OCI-LY7 (cell line): ENCODE measurements at regions of chr1 and their contacts with region 1.

Region 1: DNA sequence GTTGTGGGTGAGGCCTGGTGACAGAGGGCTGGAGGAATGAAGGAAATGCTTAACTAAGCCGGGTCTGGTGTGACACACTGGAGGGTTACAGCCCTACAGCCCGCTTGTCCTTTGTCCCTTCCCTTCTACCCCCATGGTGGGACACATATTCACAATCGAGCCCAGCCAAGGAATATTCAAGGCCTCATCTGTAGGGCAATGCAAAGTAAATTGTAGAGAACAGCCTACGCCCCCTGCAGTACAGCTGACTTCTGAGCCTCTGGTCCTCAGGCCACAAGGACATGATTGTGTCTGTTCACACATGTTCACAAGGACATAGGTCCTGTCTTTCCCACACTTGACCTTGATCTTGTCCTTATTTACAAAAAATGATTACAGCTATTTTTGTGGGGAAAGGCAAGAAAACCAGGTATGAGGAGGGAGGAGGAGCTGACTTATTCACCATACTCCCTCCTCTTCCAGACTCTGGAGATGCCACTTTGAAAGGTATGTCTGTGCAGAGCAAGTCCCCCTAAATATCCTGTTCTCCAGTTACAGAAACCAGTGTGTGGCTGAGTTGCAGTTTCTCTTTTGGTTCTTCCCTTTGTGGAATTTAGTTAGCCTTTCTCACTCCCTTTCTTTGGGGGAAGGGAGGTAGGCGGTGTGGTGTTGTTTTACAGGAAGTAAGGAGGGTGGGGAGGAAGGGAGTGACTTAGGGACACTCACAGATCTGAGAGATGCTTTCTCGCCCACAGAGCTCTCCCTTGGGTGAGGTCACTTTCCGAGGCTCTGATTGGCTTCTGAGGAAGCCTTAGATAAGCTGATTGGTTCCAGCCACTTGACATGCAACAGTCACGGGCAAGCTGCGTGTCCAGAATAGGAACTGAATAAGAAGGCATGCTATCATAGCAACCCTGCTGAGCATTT is 14.6 kb downstream of the POLR3GL start:
- DNase-seq: peak; percentile 98
- H3K4me3 ChIP-seq: peak overlapping the region; percentile 36
- H3K27ac ChIP-seq: peak overlapping the region; percentile 94
- H3K4me1 ChIP-seq: peaks cover 68% of the 10 kb centered on the region
- CTCF ChIP-seq: peak; percentile 70

Region 2: GRCh38 chr1:145916745-145917144 is 62.4 kb before region 1 on chr1:
- CTCF ChIA-PET with region 1: no interaction called
- POLR2A ChIA-PET with region 1: no interaction called
- intact Hi-C with region 1: no loop called
- DNase-seq: no peak
- H3K4me3 ChIP-seq: no peak overlapping the region
- H3K27ac ChIP-seq: no peak overlapping the region
- H3K4me1 ChIP-seq: peaks cover 22% of the 10 kb centered on the region
- CTCF ChIP-seq: no peak

Region 3: DNA sequence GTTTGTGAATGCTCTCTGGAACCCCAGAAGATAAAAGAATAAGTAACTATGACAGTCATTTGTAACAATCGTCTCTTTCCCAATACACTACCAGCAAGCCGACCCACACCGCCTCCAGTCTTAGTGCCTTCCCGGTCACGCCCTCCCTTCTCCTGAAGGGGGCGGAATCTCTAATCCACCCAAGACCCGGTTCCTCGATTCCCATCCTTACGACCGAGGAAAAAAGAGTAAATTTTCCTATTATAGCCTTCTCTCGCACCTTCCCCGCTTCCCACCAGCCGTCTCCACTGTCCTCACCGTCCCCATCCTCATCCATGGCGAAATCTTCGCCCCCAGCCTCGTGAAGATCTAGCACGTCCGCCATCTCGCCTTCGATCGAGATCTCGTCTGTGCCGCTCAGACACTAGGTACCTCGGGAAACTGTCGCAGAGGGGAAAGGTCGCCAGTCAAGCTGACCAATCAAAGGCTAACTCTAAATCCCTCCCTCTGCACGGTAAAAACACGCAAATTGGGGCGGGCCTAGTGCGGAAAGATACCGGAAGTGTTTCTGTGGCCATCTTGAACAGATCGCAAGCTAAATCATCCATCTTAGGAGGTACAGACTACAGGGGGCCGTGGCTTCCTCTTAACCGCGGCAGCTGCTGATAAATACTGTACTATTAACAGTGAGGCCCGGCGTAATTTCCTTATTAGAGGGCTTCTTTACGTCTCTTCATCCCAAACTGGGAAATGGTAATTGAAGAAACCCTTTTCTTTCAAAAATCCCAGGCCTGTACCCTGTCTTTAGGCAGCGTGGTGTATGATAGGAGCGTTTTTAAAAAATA is 51.8 kb before region 1 on chr1 and contains the start of gene RBM8A:
- CTCF ChIA-PET with region 1: no interaction called
- POLR2A ChIA-PET with region 1: interaction called, 12 read pairs
- intact Hi-C with region 1: no loop called
- DNase-seq: peak; percentile 99
- H3K4me3 ChIP-seq: peak within 1 kb of the TSS; percentile 92
- H3K27ac ChIP-seq: peak within 1 kb of the TSS; percentile 91
- H3K4me1 ChIP-seq: peaks cover 25% of the 10 kb centered on the region
- CTCF ChIP-seq: peak; percentile 88
- total RNA-seq, gene RBM8A: 135 and 239 TPM in 2 replicates

Region 4: DNA sequence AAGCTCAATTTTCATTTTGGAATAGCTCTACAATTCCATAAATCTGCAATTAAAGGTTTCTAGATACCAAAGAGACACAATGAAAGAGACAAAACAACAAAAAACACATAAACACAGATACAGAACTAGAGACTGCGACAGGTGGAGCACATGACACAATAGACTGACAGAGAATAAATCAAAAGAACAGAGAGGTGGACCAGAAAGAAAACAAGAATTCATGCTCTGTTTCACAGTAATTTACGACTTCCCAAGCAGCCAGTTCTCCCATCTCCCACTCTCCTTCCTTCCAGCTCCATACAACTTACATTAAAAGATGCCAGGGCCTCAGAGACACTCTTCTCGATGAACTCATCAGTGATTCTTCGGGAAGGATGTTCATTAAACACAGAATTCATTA is 36.7 kb before region 1 on chr1:
- CTCF ChIA-PET with region 1: no interaction called
- POLR2A ChIA-PET with region 1: no interaction called
- intact Hi-C with region 1: no loop called
- DNase-seq: no peak
- H3K4me3 ChIP-seq: no peak overlapping the region
- H3K27ac ChIP-seq: no peak overlapping the region
- H3K4me1 ChIP-seq: peaks cover 6% of the 10 kb centered on the region
- CTCF ChIP-seq: no peak

Region 5: GRCh38 chr1:145963995-145964901 is 14.9 kb before region 1 on chr1 and contains the starts of genes ANKRD34A and POLR3GL:
- CTCF ChIA-PET with region 1: no interaction called
- POLR2A ChIA-PET with region 1: interaction called, 58 read pairs
- intact Hi-C with region 1: no loop called
- DNase-seq: peak; percentile 95
- H3K4me3 ChIP-seq: peak within 1 kb of the TSS; percentile 75
- H3K27ac ChIP-seq: peak within 1 kb of the TSS; percentile 36
- H3K4me1 ChIP-seq: peaks cover 53% of the 10 kb centered on the region
- CTCF ChIP-seq: no peak
- total RNA-seq, gene ANKRD34A: 0.62 and 1.9 TPM in 2 replicates
- total RNA-seq, gene POLR3GL: 19.8 and 29.8 TPM in 2 replicates

Region 6: GRCh38 chr1:146007506-146008133 is 28.5 kb after region 1 on chr1:
- CTCF ChIA-PET with region 1: interaction called, 20 read pairs
- POLR2A ChIA-PET with region 1: interaction called, 15 read pairs
- intact Hi-C with region 1: loop called (anchors 1 kb)
- DNase-seq: no peak
- H3K4me3 ChIP-seq: no peak overlapping the region
- H3K27ac ChIP-seq: no peak overlapping the region
- H3K4me1 ChIP-seq: peaks cover 8% of the 10 kb centered on the region
- CTCF ChIP-seq: peak; percentile 62; the same call in 1 of the 2 replicates

Region 7: DNA sequence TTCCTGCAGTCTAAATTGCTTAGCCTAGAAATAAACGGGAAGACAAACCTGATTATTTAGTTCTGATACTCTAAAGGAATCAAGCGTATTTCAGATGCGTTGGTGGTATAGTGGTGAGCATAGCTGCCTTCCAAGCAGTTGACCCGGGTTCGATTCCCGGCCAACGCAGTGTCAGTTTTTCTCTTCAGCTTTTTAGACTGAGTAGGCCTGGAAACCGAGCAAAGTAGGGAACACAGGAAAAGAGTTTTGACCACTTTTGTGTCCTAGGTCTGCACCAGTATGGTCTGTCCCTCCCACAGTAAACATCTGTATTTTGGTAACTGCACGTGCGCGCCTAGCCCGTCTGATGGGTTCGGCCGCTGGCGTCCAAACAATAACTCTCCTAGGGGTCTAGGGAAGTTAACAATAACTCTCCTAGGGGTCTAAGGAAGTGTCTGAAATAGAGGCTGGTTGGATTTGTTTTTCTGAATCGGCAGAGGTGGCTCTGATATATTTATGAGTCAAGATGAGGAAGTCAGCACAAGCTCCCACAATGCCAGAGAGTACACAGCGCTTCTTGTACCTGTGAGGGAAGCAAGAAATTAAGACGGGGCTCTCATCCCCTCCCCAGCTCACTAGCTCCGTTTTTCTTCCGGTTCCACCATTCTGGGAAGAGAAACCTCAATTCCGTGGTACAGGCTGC is 58.0 kb after region 1 on chr1:
- CTCF ChIA-PET with region 1: no interaction called
- POLR2A ChIA-PET with region 1: interaction called, 5 read pairs
- intact Hi-C with region 1: loop called (anchors 2 kb)
- DNase-seq: peak; percentile 84
- H3K4me3 ChIP-seq: peak overlapping the region; percentile 76
- H3K27ac ChIP-seq: peak overlapping the region; percentile 93
- H3K4me1 ChIP-seq: peaks cover 35% of the 10 kb centered on the region
- CTCF ChIP-seq: no peak